Activated CD4-positive, alpha-beta T cell treated with anti-CD3 and anti-CD28 coated beads, Interleukin-2, amount 10 ng/mL, durations not matched to agents 7 days and 5 days (primary cell): ENCODE measurements at regions of chr12 and their contacts with region 1.

Region 1: GRCh38 chr12:112992541-112993398 is 14.5 kb downstream of the OAS2 start:
- DNase-seq: peak; percentile 69
- H3K4me3 Mint-ChIP-seq: no peak overlapping the region
- H3K27ac Mint-ChIP-seq: no peak overlapping the region
- H3K4me1 Mint-ChIP-seq: peaks cover 44% of the 10 kb centered on the region
- H3K27me3 Mint-ChIP-seq: no peaks in the 10 kb centered on the region

Region 2: DNA sequence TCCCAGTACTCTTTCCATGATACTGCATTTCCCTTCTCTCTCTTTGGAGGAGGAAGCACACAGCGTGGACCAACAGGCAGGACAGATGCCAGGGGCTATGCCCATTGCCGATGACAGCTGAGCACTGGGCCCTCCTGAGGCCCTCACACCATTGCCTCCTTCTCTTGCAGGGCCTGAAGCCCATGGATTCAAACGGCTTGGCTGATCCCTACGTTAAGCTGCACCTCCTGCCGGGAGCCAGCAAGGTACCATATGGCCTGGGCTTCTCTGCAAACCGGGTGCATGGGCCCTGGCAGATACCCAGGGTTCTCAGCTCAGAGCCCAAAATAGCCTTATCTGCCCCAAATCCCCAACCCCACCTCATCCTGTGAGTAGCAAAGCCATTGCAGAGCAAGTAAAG is 111.2 kb before region 1 on chr12:
- CTCF ChIA-PET with region 1: no interaction called
- POLR2A ChIA-PET with region 1: no interaction called
- DNase-seq: no peak
- H3K4me3 Mint-ChIP-seq: no peak overlapping the region
- H3K27ac Mint-ChIP-seq: no peak overlapping the region
- H3K4me1 Mint-ChIP-seq: no peaks in the 10 kb centered on the region
- H3K27me3 Mint-ChIP-seq: peaks cover 39% of the 10 kb centered on the region

Region 3: DNA sequence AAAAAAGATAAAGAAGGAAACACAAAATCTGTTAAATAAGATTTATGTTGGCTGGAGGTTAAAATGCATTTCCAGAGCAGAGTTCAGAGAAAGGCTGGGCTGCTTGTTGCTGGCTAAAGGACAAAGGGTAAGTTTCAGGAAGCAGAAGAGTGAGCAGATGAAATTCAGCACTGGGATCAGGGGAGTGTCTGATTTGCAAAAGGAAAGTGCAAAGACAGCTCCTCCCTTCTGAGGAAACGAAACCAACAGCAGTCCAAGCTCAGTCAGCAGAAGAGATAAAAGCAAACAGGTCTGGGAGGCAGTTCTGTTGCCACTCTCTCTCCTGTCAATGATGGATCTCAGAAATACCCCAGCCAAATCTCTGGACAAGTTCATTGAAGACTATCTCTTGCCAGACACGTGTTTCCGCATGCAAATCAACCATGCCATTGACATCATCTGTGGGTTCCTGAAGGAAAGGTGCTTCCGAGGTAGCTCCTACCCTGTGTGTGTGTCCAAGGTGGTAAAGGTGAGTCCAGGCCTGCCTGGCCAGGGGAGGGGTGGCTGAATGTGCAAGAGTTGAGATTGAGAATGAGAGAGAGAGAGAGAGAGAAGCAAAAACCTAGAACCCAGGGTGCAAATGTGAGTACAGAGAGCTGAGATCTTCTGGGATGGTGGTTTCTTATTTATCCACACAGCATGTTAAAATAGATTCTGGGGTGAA is 85.9 kb before region 1 on chr12 and contains the start of gene OAS1:
- CTCF ChIA-PET with region 1: interaction called, 13 read pairs
- POLR2A ChIA-PET with region 1: no interaction called
- DNase-seq: peak; percentile 75
- H3K4me3 Mint-ChIP-seq: peak within 1 kb of the TSS; percentile 98
- H3K27ac Mint-ChIP-seq: peak within 1 kb of the TSS; percentile 98
- H3K4me1 Mint-ChIP-seq: peaks cover 75% of the 10 kb centered on the region
- H3K27me3 Mint-ChIP-seq: no peaks in the 10 kb centered on the region
- total RNA-seq, gene OAS1: 194 to 197 TPM

Region 4: GRCh38 chr12:112961074-112961473 is 31.7 kb before region 1 on chr12:
- CTCF ChIA-PET with region 1: interaction called, 14 read pairs
- POLR2A ChIA-PET with region 1: no interaction called
- DNase-seq: peak; percentile 43
- H3K4me3 Mint-ChIP-seq: no peak overlapping the region
- H3K27ac Mint-ChIP-seq: no peak overlapping the region
- H3K4me1 Mint-ChIP-seq: peaks cover 39% of the 10 kb centered on the region
- H3K27me3 Mint-ChIP-seq: no peaks in the 10 kb centered on the region

Region 5: GRCh38 chr12:113005754-113006153 is 13.0 kb after region 1 on chr12:
- CTCF ChIA-PET with region 1: interaction called, 44 read pairs
- POLR2A ChIA-PET with region 1: no interaction called
- DNase-seq: no peak
- H3K4me3 Mint-ChIP-seq: no peak overlapping the region
- H3K27ac Mint-ChIP-seq: no peak overlapping the region
- H3K4me1 Mint-ChIP-seq: no peaks in the 10 kb centered on the region
- H3K27me3 Mint-ChIP-seq: no peaks in the 10 kb centered on the region

Region 6: GRCh38 chr12:113184900-113185773 is 192.4 kb after region 1 on chr12 and contains the starts of genes DDX54 and RITA1:
- CTCF ChIA-PET with region 1: interaction called, 11 read pairs
- POLR2A ChIA-PET with region 1: no interaction called
- DNase-seq: peak; percentile 91
- H3K4me3 Mint-ChIP-seq: peak within 1 kb of the TSS; percentile 97
- H3K27ac Mint-ChIP-seq: peak within 1 kb of the TSS; percentile 97
- H3K4me1 Mint-ChIP-seq: peaks cover 41% of the 10 kb centered on the region
- H3K27me3 Mint-ChIP-seq: no peaks in the 10 kb centered on the region
- total RNA-seq, gene DDX54: 65.6 to 72.0 TPM
- total RNA-seq, gene RITA1: 17.0 to 18.0 TPM